Right ventricle myocardium inferior (tissue), 1 donor: ENCODE measurements at regions of chr7 and their contacts with region 1.

Region 1: DNA sequence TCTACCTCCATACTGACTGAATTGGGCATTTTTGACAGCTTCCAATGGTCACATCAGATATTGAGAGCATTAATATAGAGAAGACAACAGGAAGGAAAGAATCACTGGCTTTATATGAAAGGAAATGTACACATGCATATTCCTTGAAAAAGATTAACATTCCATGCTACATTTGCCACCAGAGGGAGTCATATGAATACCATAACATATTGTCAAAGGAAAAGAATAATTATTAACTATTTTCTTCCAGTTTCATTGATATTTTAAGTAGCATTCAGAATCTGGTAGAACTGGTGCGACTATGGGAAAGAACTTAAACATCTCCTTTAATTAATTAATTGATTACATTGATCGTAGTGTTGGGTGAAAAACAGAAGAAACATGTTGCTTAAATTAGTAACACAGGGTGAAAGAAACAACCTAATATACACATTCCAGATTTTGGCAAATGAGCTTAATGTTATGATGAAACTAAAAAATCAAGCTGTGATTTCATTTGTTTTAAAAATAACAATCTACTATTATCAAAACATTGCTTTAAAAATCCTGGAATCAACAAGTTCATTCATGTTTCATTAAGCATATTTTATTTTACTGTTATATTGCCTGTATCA is 71.5 kb downstream of the GPR85 start:
- DNase-seq: no peak
- ATAC-seq: no peak

Region 2: GRCh38 chr7:113118074-113118959 is 103.2 kb after region 1 on chr7 and contains the start of gene SMIM30:
- intact Hi-C with region 1: loop called (anchors 5 kb)
- DNase-seq: peak; percentile 96
- ATAC-seq: peak; percentile 100
- total RNA-seq, gene SMIM30: 117 TPM

Region 3: DNA sequence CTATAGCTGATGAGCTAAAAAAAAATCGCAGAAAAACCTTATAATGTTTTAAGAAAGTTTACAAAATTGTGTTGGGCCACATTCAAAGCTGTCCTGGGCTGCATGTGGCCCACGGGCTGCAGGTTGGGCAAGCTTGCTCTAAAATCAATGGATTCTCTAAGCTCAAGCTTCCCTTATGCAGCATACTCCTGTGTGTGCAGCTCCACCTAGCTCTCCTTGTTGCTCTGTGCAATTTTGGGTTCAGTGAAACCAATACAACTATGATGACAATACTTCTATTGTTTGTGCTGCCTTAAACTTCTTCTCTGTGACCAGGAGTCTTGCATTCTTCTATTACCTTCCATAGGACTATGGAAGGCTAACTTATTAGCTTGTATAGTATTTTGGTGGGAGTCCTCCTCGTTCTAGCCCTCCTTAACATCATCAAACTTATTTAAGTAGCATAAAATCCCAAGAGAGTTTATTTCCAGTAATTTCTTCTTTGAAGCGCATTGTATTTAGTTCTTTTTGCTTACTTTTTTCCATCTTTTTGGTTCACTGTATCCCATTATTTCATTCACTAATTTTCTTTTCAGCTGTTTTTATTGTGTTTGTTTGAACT is 274.1 kb after region 1 on chr7:
- intact Hi-C with region 1: loop called (anchors 2 kb)
- DNase-seq: no peak
- ATAC-seq: no peak

Region 4: GRCh38 chr7:113421696-113422330 is 406.7 kb after region 1 on chr7:
- intact Hi-C with region 1: loop called (anchors 5 kb)
- DNase-seq: peak; percentile 79
- ATAC-seq: peak; percentile 82